H1 (cell line): ENCODE measurements at regions of chr5 and their contacts with region 1.

Region 1: GRCh38 chr5:141369994-141370848 is at the start of gene PCDHGB3:
- DNase-seq: no peak
- H3K4me3 ChIP-seq: no peak within 1 kb of the TSS
- H3K27ac ChIP-seq: no peak within 1 kb of the TSS
- H3K4me1 ChIP-seq: no peaks in the 10 kb centered on the region
- H3K27me3 ChIP-seq: no peaks in the 10 kb centered on the region
- CTCF ChIP-seq: peak; percentile 14 to 28 (median 24); a peak in 3 of 4 replicates
- EP300 ChIP-seq: no peak
- POLR2A ChIP-seq: no peak
- RAD21 ChIP-seq: peak; percentile 43 to 50; a peak in 3 of 4 replicates
- total RNA-seq, gene PCDHGB3: 1.3 and 1.6 TPM in 2 replicates

Region 2: GRCh38 chr5:141349917-141350619 is 20.2 kb before region 1 on chr5 and contains the start of gene PCDHGB1:
- CTCF ChIA-PET with region 1: interaction called, 27 read pairs
- POLR2A ChIA-PET with region 1: no interaction called
- DNase-seq: peak in 1 of 2 experiments; percentile 83
- H3K4me3 ChIP-seq: peak within 1 kb of the TSS; percentile 17 to 53 (median 31); a peak in 7 of 8 replicates
- H3K27ac ChIP-seq: no peak within 1 kb of the TSS
- H3K4me1 ChIP-seq: peaks cover 0 to 5% (median under 1%) of the 10 kb centered on the region in 4 experiments; a peak in 1 of 7 replicates
- H3K27me3 ChIP-seq: no peaks in the 10 kb centered on the region
- CTCF ChIP-seq: peak; percentile 69 to 86 (median 75)
- EP300 ChIP-seq: no peak
- POLR2A ChIP-seq: peak in 1 of 2 experiments; percentile 65; a peak in 1 of 3 replicates
- RAD21 ChIP-seq: peak; percentile 74 to 81
- total RNA-seq, gene PCDHGB1: 2.8 and 3.9 TPM in 2 replicates

Region 3: GRCh38 chr5:141359790-141360426 is 10.3 kb before region 1 on chr5 and contains the start of gene PCDHGB2:
- CTCF ChIA-PET with region 1: interaction called, 27 read pairs
- POLR2A ChIA-PET with region 1: no interaction called
- DNase-seq: no peak
- H3K4me3 ChIP-seq: peak within 1 kb of the TSS in 1 of 4 experiments; percentile 33; a peak in 1 of 8 replicates
- H3K27ac ChIP-seq: no peak within 1 kb of the TSS
- H3K4me1 ChIP-seq: peaks cover 0 to 3% (median under 1%) of the 10 kb centered on the region in 4 experiments; a peak in 1 of 7 replicates
- H3K27me3 ChIP-seq: no peaks in the 10 kb centered on the region
- CTCF ChIP-seq: peak in 2 of 3 experiments; percentile 60 to 74; a peak in 3 of 4 replicates
- EP300 ChIP-seq: no peak
- POLR2A ChIP-seq: no peak
- RAD21 ChIP-seq: peak; percentile 78 to 82
- total RNA-seq, gene PCDHGB2: 2.8 and 2.9 TPM in 2 replicates

Region 4: GRCh38 chr5:141387233-141387949 is 17.2 kb after region 1 on chr5 and contains the start of gene PCDHGB4:
- CTCF ChIA-PET with region 1: interaction called, 26 read pairs
- POLR2A ChIA-PET with region 1: interaction called, 4 read pairs
- DNase-seq: peak in 1 of 2 experiments; percentile 82
- H3K4me3 ChIP-seq: peak within 1 kb of the TSS; percentile 42 to 69 (median 44); a peak in 7 of 8 replicates
- H3K27ac ChIP-seq: no peak within 1 kb of the TSS
- H3K4me1 ChIP-seq: no peaks in the 10 kb centered on the region
- H3K27me3 ChIP-seq: no peaks in the 10 kb centered on the region; a peak in 1 of 7 replicates
- CTCF ChIP-seq: peak; percentile 56 to 66 (median 65)
- EP300 ChIP-seq: no peak
- POLR2A ChIP-seq: no peak
- RAD21 ChIP-seq: peak; percentile 59 to 67
- total RNA-seq, gene PCDHGB4: 7.8 and 9.1 TPM in 2 replicates

Region 5: GRCh38 chr5:141402553-141403260 is 32.5 kb after region 1 on chr5 and contains the start of gene PCDHGA9:
- CTCF ChIA-PET with region 1: interaction called, 10 read pairs
- POLR2A ChIA-PET with region 1: no interaction called
- DNase-seq: no peak
- H3K4me3 ChIP-seq: no peak within 1 kb of the TSS
- H3K27ac ChIP-seq: no peak within 1 kb of the TSS
- H3K4me1 ChIP-seq: no peaks in the 10 kb centered on the region
- H3K27me3 ChIP-seq: no peaks in the 10 kb centered on the region
- CTCF ChIP-seq: peak in 2 of 3 experiments; percentile 21 to 35; a peak in 3 of 4 replicates
- EP300 ChIP-seq: no peak
- POLR2A ChIP-seq: no peak
- RAD21 ChIP-seq: peak; percentile 33 to 46
- total RNA-seq, gene PCDHGA9: 1.1 and 1.2 TPM in 2 replicates